Activated naive CD4-positive, alpha-beta T cell treated with anti-CD3 and anti-CD28 coated beads for 36 hours (primary cell): ENCODE measurements at regions of chr7 and their contacts with region 1.

Region 1: GRCh38 chr7:35537067-35538023 is 157.6 kb downstream of the HERPUD2 start:
- DNase-seq: peak; percentile 79
- H3K4me3 Mint-ChIP-seq: peak overlapping the region; percentile 67
- H3K27ac Mint-ChIP-seq: no peak overlapping the region
- H3K4me1 Mint-ChIP-seq: peaks cover 1% of the 10 kb centered on the region
- H3K27me3 Mint-ChIP-seq: peaks cover 9% of the 10 kb centered on the region

Region 2: GRCh38 chr7:34321000-34321581 is 1216.3 kb before region 1 on chr7:
- CTCF ChIA-PET with region 1: no interaction called
- intact Hi-C with region 1: loop called (anchors 2 kb)
- DNase-seq: peak; percentile 61
- H3K4me3 Mint-ChIP-seq: no peak overlapping the region
- H3K27ac Mint-ChIP-seq: no peak overlapping the region
- H3K4me1 Mint-ChIP-seq: peaks cover 3% of the 10 kb centered on the region
- H3K27me3 Mint-ChIP-seq: peaks cover 29% of the 10 kb centered on the region

Region 3: GRCh38 chr7:34675749-34676374 is 861.5 kb before region 1 on chr7:
- CTCF ChIA-PET with region 1: no interaction called
- intact Hi-C with region 1: loop called (anchors 5 kb)
- DNase-seq: peak; percentile 37
- H3K4me3 Mint-ChIP-seq: no peak overlapping the region
- H3K27ac Mint-ChIP-seq: no peak overlapping the region
- H3K4me1 Mint-ChIP-seq: no peaks in the 10 kb centered on the region
- H3K27me3 Mint-ChIP-seq: peaks cover 4% of the 10 kb centered on the region

Region 4: DNA sequence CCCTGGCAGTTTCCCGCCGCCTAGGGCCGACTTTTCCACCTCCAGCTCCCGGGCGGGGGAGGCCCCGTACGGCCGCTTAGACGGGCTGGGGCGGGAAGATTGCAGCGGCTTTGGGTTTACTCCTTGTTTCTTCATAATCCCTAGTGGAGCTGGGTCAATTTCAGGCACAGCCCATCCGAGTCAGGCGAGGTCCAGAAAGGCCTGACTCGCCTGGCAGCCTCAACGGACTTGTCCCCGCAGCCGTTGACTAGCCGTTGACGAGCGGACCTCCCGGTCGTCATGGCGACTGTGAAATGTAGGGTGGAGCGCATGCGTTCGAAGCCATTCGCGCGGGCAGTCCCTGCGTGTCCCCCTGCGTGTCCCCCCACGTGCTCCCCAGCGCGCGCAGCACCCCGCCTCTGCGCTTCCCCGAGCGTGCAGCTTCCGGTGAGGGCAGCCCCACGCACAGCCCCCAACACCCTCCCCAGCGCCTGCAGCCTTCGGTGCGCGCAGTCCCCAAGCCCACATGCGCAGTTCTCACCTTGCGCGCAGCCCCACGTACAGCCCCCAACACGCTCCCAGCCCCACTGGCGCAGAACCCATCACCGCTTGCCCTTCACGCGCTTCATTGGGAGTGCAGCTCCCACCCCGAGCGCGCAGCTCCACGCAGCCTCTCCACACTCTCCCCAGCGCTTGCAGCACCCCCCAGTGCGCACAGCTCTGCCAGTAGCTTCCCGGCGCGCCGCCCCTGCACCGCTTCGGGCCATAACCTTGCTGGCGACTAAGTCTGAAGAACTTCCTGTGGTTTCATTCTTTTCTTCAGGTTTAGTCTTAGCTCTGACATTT is 351.2 kb before region 1 on chr7:
- CTCF ChIA-PET with region 1: no interaction called
- intact Hi-C with region 1: loop called (anchors 5 kb)
- DNase-seq: peak; percentile 12
- H3K4me3 Mint-ChIP-seq: peak overlapping the region; percentile 71
- H3K27ac Mint-ChIP-seq: no peak overlapping the region
- H3K4me1 Mint-ChIP-seq: peaks cover 10% of the 10 kb centered on the region
- H3K27me3 Mint-ChIP-seq: peaks cover 25% of the 10 kb centered on the region

Region 5: GRCh38 chr7:35424869-35425495 is 112.4 kb before region 1 on chr7:
- CTCF ChIA-PET with region 1: interaction called, 13 read pairs
- intact Hi-C with region 1: loop called (anchors 1 kb)
- DNase-seq: peak; percentile 69
- H3K4me3 Mint-ChIP-seq: no peak overlapping the region
- H3K27ac Mint-ChIP-seq: no peak overlapping the region
- H3K4me1 Mint-ChIP-seq: no peaks in the 10 kb centered on the region
- H3K27me3 Mint-ChIP-seq: peaks cover 17% of the 10 kb centered on the region

Region 6: GRCh38 chr7:35519971-35520809 is 17.2 kb before region 1 on chr7:
- CTCF ChIA-PET with region 1: interaction called, 3 read pairs
- intact Hi-C with region 1: loop called (anchors 1 kb)
- DNase-seq: peak; percentile 73
- H3K4me3 Mint-ChIP-seq: no peak overlapping the region
- H3K27ac Mint-ChIP-seq: no peak overlapping the region
- H3K4me1 Mint-ChIP-seq: no peaks in the 10 kb centered on the region
- H3K27me3 Mint-ChIP-seq: peaks cover 4% of the 10 kb centered on the region

Region 7: DNA sequence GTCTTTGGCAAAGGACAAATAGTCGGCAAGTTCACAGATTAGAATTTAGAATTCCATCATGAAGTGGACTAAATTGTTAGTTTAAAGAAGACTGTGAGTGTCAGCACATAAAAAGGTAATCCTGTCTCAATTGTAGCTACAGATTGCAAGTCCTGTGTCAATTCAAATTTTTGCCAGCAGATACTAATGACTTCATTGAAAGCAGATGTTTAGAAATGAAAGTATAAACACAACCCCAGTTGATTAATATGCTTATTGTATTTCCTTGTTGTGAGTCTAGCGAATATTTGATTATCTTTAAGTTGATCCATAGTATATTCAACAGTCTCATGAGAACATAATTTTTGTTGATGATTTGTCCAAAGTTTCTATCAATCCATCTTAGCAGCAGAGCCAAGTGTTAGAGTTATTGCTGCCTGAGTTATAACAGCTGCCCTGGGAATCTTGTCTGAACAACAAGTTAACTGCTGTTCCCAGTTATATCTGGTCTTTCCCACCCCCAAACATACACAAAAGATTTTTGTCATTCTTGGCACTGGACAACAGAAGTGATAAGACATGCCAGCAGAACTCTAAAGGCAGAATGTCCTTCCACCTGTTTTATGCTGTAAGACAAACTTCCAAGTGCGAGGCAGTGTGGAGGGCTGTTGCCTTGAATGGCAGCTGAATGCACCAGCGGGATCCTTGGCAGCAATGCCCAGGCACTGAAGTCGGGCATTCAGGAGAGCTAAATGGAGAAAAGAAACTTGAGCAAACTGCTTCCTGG is 178.9 kb after region 1 on chr7:
- CTCF ChIA-PET with region 1: no interaction called
- intact Hi-C with region 1: no loop called
- DNase-seq: no peak
- H3K4me3 Mint-ChIP-seq: no peak overlapping the region
- H3K27ac Mint-ChIP-seq: no peak overlapping the region
- H3K4me1 Mint-ChIP-seq: peaks cover under 1% of the 10 kb centered on the region
- H3K27me3 Mint-ChIP-seq: no peaks in the 10 kb centered on the region

Region 8: DNA sequence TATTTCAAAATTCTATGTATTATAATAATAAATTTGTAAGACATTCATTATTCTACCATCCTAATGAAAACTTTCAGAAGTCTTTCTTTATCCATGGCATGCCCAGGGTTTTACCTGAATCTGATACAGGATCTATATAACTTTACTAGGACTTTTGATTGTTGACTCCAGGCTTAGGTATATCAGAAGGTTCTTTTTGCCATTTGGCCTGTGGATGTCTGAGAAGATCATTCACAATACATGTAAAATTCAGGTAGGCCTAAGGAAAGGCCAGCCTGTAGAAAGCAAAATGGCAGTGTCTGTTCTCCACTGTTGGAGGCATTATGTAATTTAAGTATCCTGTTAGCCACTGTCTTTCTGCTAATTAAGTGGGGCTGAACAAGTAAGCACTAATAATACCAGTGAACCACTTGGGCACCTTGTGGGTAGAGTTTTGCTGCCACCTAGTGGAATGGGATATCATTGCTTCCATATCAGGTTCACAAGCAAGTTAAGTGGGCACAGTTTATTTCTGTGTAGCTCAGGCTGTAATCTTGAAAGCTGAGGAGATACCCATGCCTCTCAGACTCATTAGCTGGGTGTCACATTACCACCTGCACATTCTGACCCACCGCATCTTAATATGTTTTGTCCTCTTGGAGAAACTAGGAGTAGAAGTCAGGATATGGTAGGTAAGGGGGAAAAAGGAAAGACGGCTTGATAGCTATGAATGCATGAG is 369.0 kb after region 1 on chr7:
- CTCF ChIA-PET with region 1: no interaction called
- intact Hi-C with region 1: loop called (anchors 5 kb)
- DNase-seq: peak; percentile 82
- H3K4me3 Mint-ChIP-seq: no peak overlapping the region
- H3K27ac Mint-ChIP-seq: no peak overlapping the region
- H3K4me1 Mint-ChIP-seq: peaks cover 4% of the 10 kb centered on the region
- H3K27me3 Mint-ChIP-seq: no peaks in the 10 kb centered on the region